ENCODE measurements at regions of chr14 and their contacts with region 1.

Region 1: GRCh38 chr14:91911474-91912032 is 35.9 kb downstream of the FBLN5 start:
- DNase-seq: peak in 4 of 5 donors; percentile 60 to 71 (median 64)
- H3K4me3 ChIP-seq: no peak overlapping the region
- H3K4me3 Mint-ChIP-seq: peak overlapping the region in 2 of 8 donors; percentile 20 to 29
- H3K27ac ChIP-seq: no peak overlapping the region
- H3K27ac Mint-ChIP-seq: peak overlapping the region in 4 of 7 donors; percentile 70 to 82 (median 82)
- H3K4me1 ChIP-seq: peaks cover 8% of the 10 kb centered on the region
- H3K4me1 Mint-ChIP-seq: peaks cover 11 to 13% (median 11%) of the 10 kb centered on the region in 4 donors
- H3K27me3 ChIP-seq: no peaks in the 10 kb centered on the region
- H3K27me3 Mint-ChIP-seq: peaks cover 1 to 5% of the 10 kb centered on the region in 2 donors

Region 2: DNA sequence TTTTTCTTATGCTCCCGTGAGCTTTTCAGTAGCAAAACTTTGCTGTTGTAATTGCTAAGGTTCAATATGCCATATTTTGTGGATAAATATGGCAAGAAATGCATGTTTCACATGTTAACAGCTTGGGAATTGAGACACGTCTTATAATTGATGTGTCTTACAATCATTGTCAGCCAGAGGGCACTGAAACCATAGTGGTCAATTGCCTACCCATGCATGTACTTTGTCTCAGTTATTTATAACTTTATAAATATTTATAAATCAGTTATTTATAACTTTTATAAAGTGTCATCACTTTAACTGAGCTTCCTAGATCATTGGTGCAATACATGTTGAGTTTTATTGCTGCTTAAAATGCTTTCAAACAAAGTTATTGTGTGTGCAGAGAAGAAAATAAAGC is 261.6 kb before region 1 on chr14:
- CTCF ChIA-PET with region 1: interaction called, 54 read pairs
- POLR2A ChIA-PET with region 1: no interaction called
- intact Hi-C with region 1: loop called (anchors 5 kb)
- DNase-seq: peak in 4 of 5 donors; percentile 9 to 43 (median 24)
- H3K4me3 ChIP-seq: no peak overlapping the region
- H3K4me3 Mint-ChIP-seq: no peak overlapping the region
- H3K27ac ChIP-seq: no peak overlapping the region
- H3K27ac Mint-ChIP-seq: no peak overlapping the region
- H3K4me1 ChIP-seq: no peaks in the 10 kb centered on the region
- H3K4me1 Mint-ChIP-seq: peaks cover 0 to 6% (median 2%) of the 10 kb centered on the region in 4 donors
- H3K27me3 ChIP-seq: no peaks in the 10 kb centered on the region
- H3K27me3 Mint-ChIP-seq: no peaks in the 10 kb centered on the region

Region 3: DNA sequence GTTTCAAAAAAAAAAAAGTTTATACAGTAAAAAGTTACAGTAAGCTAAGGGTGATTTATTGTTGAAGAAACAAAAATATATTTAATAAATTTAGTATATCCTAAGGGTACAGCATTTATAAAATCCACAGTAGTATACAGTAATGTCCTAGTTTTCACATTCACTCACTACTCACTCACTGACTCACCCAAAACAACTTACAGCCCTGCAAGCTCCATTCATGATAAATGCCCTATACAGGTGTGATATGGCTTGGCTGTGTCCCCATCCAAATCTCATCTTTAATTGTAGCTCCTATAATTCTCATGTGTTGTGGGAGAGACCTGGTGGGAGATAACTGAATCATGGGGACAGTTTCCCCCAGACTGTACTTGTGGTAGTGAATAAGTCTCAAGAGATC is 105.9 kb before region 1 on chr14:
- CTCF ChIA-PET with region 1: interaction called, 10 read pairs
- POLR2A ChIA-PET with region 1: interaction called, 3 read pairs
- intact Hi-C with region 1: no loop called
- DNase-seq: no peak
- H3K4me3 ChIP-seq: no peak overlapping the region
- H3K4me3 Mint-ChIP-seq: no peak overlapping the region
- H3K27ac ChIP-seq: no peak overlapping the region
- H3K27ac Mint-ChIP-seq: peak overlapping the region in 3 of 7 donors; percentile 2 to 66 (median 50)
- H3K4me1 ChIP-seq: peaks cover 4% of the 10 kb centered on the region
- H3K4me1 Mint-ChIP-seq: peaks cover 15 to 32% (median 24%) of the 10 kb centered on the region in 4 donors
- H3K27me3 ChIP-seq: no peaks in the 10 kb centered on the region
- H3K27me3 Mint-ChIP-seq: no peaks in the 10 kb centered on the region

Region 4: GRCh38 chr14:91843437-91843836 is 68.1 kb before region 1 on chr14:
- CTCF ChIA-PET with region 1: interaction called, 17 read pairs
- POLR2A ChIA-PET with region 1: interaction called, 11 read pairs
- intact Hi-C with region 1: no loop called
- DNase-seq: no peak
- H3K4me3 ChIP-seq: no peak overlapping the region
- H3K4me3 Mint-ChIP-seq: no peak overlapping the region
- H3K27ac ChIP-seq: no peak overlapping the region
- H3K27ac Mint-ChIP-seq: peak overlapping the region in 3 of 7 donors; percentile 29 to 40 (median 32)
- H3K4me1 ChIP-seq: peaks cover 57% of the 10 kb centered on the region
- H3K4me1 Mint-ChIP-seq: peaks cover 53 to 87% (median 75%) of the 10 kb centered on the region in 4 donors
- H3K27me3 ChIP-seq: no peaks in the 10 kb centered on the region
- H3K27me3 Mint-ChIP-seq: no peaks in the 10 kb centered on the region

Region 5: DNA sequence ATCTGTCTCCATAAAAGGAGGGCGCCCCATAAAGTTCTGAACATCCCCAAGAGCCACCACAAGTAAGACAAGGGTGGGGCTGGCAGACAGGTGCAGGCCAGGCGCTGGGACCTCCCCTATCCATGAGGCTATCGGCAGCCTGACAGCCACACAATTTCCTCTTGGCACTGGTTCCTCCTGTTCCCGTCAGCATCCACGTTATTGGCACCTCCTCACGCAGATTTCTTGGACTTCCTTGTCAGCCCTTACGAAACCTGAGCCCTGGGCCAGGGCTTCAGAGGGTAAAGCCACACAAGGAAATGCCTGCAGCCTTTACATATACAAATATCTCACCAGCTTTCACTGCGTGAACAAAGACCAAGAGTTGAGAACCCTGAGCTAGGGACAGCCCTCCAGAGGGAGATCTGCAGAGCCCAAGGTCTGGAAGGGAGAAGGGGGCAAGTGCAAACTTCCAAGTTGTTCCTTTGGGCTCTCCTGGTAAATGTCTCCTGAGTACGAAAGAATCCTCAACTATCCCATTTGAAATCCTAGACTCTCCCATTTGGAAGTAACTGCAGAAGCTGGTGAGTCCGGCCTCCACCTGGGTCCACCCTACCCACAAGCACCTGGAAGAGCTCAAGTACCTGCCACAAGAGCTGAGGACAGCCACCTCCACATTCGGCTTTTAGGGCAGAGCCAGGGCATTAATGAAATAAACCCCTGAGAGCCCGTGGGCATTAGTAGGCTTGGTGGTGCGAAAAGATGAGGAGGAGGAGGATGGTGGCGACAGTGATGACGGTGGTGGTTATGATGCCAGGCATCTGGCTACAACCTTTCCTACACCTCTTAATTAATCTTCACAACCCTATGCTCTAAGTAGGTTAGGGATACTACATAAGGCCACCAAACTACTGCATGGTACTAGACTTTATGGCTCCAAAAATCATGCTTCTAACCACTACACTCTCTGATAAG is 38.8 kb before region 1 on chr14:
- CTCF ChIA-PET with region 1: interaction called, 30 read pairs
- POLR2A ChIA-PET with region 1: interaction called, 45 read pairs
- intact Hi-C with region 1: loop called (anchors 2 kb)
- DNase-seq: peak; percentile 69 to 78 (median 72)
- H3K4me3 ChIP-seq: peak overlapping the region; percentile 45 to 58
- H3K4me3 Mint-ChIP-seq: peak overlapping the region; percentile 80 to 93 (median 88)
- H3K27ac ChIP-seq: peak overlapping the region; percentile 79
- H3K27ac Mint-ChIP-seq: peak overlapping the region; percentile 93 to 100 (median 97)
- H3K4me1 ChIP-seq: peaks cover 96% of the 10 kb centered on the region
- H3K4me1 Mint-ChIP-seq: peaks cover 62 to 100% (median 89%) of the 10 kb centered on the region in 4 donors
- H3K27me3 ChIP-seq: no peaks in the 10 kb centered on the region
- H3K27me3 Mint-ChIP-seq: no peaks in the 10 kb centered on the region

Measured in CD4-positive, alpha-beta memory T cell (primary cell).